Heart right ventricle (tissue), 16 donors: ENCODE measurements at regions of chr17 and their contacts with region 1.

Region 1: DNA sequence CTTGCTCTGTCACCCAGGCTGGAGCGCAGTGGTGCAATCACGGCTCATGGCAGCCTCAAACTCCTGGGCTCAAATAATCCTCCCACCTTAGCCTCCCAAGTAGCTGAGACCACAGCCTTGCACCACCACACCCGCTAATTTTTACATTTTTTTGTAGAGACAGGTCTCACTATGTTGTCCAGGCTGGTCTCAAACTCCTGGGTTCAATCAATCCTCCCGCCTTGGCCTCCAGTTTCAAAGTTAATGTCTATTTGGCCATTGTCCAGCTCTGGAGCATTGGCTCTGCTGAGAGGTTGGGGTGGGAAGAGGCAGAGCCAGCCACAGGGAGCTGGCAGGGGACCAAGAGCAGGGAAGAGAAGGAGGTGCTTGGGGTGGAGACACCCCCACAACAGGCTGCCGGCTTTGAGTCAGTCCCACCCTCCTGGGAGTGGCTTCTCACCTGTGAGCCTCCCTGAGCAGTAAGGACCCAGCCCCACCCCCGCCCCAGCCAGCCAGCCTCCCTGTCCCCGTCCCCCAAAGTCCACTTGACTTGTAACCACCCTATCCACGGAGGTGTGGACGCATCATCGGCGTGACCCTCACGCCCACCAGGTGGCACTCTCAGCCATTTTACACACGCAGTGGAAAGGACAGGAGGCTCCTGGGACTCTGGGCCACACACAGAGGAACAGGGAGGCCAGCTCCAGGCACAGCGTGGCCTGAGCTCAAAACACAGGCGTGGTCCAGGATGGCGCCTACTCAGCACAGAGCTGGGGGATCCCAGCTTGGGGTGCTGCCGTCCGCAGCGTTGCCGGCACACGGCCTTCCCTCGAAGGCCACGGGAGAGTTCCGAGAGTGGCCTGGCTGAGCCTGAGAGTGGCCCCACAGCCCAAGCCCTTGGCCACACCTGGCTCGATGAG is 22.8 kb upstream of the PVALEF start:
- DNase-seq: peak; percentile 81 to 82
- ATAC-seq: peak; percentile 89 to 98 (median 92)
- H3K4me3 ChIP-seq: no peak overlapping the region
- H3K27ac ChIP-seq: no peak overlapping the region
- H3K4me1 ChIP-seq: peaks cover 0 to 9% (median 9%) of the 10 kb centered on the region in 9 donors
- H3K27me3 ChIP-seq: no peaks in the 10 kb centered on the region
- CTCF ChIP-seq: peak; percentile 47 to 77 (median 75)

Region 2: DNA sequence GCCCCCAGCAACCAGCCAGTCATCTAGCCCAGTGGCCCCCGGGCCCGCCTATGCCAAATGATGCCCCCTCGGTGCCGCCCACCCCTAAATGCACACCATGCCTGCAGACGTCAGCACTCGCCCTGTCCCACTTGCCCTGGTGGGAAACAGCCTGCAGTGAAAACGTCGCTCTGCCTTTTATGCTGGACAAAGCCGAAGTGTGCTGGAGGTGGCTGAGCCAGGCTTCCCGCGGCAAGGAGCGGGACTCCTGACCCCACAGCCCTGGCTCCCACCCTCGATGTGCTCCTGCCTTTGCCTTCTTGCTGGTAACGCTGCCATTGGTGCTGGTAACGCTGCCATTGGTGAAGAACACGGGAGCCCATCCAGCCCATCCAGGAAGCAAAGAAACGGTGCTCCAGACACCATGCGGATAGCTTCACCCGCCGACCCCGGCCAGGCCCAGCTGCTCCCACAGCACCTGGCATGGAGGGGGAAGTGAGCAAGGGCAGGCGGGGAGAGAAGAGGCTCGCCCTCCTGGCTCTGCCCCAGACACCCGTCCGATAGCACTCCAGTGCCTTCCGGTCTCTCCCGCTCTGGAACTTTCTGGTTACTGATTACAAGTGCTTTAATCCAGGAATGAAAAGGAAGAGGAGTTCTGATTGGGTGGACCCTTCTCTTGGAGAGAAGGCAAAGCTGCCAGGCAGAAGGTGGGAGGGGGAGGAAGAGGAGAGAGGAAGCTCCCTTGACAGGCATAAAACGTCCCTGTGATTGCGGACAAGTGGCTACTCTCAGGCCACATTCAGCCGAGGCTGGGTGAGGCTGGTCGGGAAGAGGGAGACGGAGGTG is 111.6 kb before region 1 on chr17:
- intact Hi-C with region 1: no loop called
- DNase-seq: peak in 1 of 2 donors; percentile 60
- ATAC-seq: peak; percentile 12 to 72 (median 54)
- H3K4me3 ChIP-seq: peak overlapping the region in 4 of 10 donors; percentile 1 to 17 (median 3)
- H3K27ac ChIP-seq: peak overlapping the region in 8 of 10 donors; percentile 15 to 75 (median 62)
- H3K4me1 ChIP-seq: peaks cover 8 to 47% (median 39%) of the 10 kb centered on the region in 9 donors
- H3K27me3 ChIP-seq: peaks cover 0 to 35% (median 27%) of the 10 kb centered on the region in 7 donors
- CTCF ChIP-seq: no peak

Region 3: GRCh38 chr17:81083125-81083765 is 59.3 kb before region 1 on chr17:
- intact Hi-C with region 1: no loop called
- DNase-seq: peak in 1 of 2 donors; percentile 54
- ATAC-seq: peak; percentile 10 to 72 (median 53)
- H3K4me3 ChIP-seq: peak overlapping the region in 1 of 10 donors; percentile 0
- H3K27ac ChIP-seq: peak overlapping the region in 9 of 10 donors; percentile 57 to 87 (median 73)
- H3K4me1 ChIP-seq: peaks cover 10 to 43% (median 33%) of the 10 kb centered on the region in 9 donors
- H3K27me3 ChIP-seq: no peaks in the 10 kb centered on the region
- CTCF ChIP-seq: no peak

Region 4: DNA sequence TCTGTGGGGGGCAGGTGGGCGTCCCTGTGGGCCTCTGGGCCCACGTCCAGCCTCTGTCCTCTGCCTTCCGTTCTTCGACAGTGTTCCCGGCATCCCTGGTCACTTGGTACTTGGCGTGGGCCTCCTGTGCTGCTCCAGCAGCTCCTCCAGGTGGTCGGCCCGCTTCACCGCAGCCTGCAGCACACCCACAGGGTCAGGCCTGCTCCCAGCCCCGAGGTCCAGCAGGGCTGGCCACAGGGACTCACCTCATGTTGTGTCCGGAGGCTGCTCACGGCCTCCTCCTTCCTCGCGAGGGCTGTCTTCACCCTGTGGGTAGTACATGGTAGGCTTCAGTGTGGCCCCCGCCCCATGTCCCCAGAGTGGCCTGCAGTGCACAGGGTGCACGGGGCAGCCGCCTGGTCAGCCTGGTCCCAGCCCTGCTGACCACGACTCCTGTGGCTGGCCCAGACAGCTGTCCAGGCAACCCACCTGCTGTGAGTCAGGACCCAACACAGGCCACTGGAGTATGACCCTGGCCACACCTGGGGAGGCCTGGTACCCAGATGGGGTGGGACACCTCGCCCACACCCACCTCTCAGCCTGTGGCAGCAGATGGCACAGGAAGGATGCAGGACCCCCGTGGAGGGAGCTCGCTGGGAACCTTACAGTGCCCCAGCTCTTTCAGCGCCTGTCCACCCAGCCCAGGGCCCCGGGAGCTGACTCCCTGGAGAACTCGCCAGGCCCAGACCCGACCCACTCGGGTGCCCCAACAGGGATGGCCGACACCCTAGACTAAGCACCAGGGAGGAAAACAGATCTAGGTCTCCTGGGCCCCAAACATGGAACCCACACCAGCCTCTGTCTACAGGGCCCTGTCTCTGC is 47.4 kb after region 1 on chr17:
- intact Hi-C with region 1: loop called in 4 of 10 experiments (anchors 5 to 10 kb)
- DNase-seq: no peak
- ATAC-seq: peak in 3 of 8 donors; percentile 15 to 28 (median 18)
- H3K4me3 ChIP-seq: no peak overlapping the region
- H3K27ac ChIP-seq: no peak overlapping the region
- H3K4me1 ChIP-seq: peaks cover 0 to 8% (median under 1%) of the 10 kb centered on the region in 9 donors
- H3K27me3 ChIP-seq: no peaks in the 10 kb centered on the region
- CTCF ChIP-seq: peak in 2 of 9 donors; percentile 23 to 26

Region 5: DNA sequence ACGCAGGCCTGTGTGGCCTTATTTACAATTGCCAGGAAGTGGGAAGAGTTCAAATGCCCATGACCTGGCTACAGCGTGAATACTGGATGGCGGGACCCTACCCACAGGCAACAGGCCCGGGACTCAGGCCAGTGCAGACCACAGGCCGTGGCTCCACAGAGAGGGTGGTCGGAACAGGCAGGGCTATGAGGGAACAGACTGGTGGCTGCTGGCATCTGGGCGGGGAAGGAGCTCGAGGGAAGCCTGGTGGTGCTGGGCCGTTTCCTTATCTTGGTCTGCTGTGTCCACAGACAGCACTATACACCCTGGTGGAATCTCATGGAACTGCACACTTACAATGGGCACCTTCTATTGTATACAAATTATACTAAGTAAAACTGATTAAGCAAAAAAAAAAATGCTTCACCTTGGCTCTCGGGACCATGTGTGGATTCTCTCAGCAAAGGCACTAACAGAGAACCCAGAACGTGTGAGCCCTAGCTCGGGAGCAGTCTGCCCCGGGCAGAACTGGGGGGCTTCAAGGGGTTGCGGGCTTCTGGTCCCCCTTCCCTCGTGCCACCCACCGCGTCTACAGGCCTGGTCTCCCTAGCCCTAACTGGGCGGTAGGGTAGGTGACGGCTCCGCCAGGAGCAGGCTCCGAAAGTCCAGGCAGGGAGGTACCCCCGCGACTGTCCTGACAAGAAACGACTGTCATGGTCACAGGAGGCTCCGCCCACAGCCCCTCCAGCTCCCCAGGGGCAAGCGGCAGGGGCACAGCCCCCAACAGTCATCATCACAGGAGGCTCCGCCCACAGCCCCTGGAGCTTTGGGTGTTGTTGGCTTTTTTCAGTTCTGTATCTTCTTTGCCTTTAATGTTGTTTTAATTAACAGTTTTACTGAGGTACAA is 58.4 kb after region 1 on chr17:
- intact Hi-C with region 1: loop called in 8 of 10 experiments (anchors 1 to 10 kb)
- DNase-seq: peak in 1 of 2 donors; percentile 66
- ATAC-seq: peak in 7 of 8 donors; percentile 15 to 70 (median 63)
- H3K4me3 ChIP-seq: no peak overlapping the region
- H3K27ac ChIP-seq: no peak overlapping the region
- H3K4me1 ChIP-seq: peaks cover 0 to 33% (median 9%) of the 10 kb centered on the region in 9 donors
- H3K27me3 ChIP-seq: no peaks in the 10 kb centered on the region
- CTCF ChIP-seq: peak; percentile 36 to 71 (median 66)

Region 6: GRCh38 chr17:81228420-81228819 is 85.9 kb after region 1 on chr17:
- intact Hi-C with region 1: loop called in 2 of 10 experiments (anchors 5 to 10 kb)
- DNase-seq: no peak
- ATAC-seq: peak in 3 of 8 donors; percentile 13 to 24 (median 20)
- H3K4me3 ChIP-seq: no peak overlapping the region
- H3K27ac ChIP-seq: no peak overlapping the region
- H3K4me1 ChIP-seq: peaks cover 0 to 19% (median 4%) of the 10 kb centered on the region in 9 donors
- H3K27me3 ChIP-seq: no peaks in the 10 kb centered on the region
- CTCF ChIP-seq: no peak

Region 7: DNA sequence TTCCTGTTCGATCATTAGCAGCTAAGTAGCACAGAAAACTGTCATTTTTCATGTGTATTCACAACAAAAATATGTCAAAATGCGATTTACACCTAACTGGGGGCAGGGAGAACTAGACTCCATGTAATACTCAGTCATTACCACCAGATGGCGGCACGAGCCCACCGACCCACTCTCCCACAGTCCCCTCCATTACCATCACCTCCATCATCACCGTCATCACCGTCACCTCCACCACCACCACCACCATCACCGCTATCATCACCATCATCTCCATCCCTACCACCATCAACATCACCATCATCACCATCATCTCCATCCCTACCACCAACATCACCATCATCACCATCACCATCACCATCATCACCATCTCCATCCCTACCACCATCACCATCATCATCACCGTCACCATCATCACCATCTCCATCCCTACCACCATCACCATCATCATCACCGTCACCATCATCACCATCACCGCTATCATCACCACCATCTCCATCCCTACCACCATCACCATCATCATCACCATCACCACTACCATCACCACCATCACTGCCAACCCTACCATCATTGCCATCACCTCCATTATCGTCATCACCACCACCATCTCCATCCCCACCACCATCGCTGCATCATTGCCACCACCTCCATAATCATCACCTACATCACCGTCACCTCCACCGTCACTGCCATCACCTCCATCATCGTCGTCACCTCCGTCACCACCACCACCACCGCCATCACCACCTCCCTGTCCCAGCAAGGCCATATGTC is 111.0 kb after region 1 on chr17:
- intact Hi-C with region 1: loop called in 1 of 10 experiments (anchors 2 kb)
- DNase-seq: peak in 1 of 2 donors; percentile 54
- ATAC-seq: peak in 5 of 8 donors; percentile 35 to 55 (median 46)
- H3K4me3 ChIP-seq: no peak overlapping the region
- H3K27ac ChIP-seq: no peak overlapping the region
- H3K4me1 ChIP-seq: peaks cover 4 to 24% (median 13%) of the 10 kb centered on the region in 9 donors
- H3K27me3 ChIP-seq: no peaks in the 10 kb centered on the region
- CTCF ChIP-seq: peak; percentile 67 to 86 (median 79)

Region 8: GRCh38 chr17:81537343-81537855 is 394.8 kb after region 1 on chr17:
- intact Hi-C with region 1: loop called in 1 of 10 experiments (anchors 10 kb)
- DNase-seq: no peak
- ATAC-seq: peak; percentile 51 to 69 (median 60)
- H3K4me3 ChIP-seq: no peak overlapping the region
- H3K27ac ChIP-seq: no peak overlapping the region
- H3K4me1 ChIP-seq: peaks cover 3 to 18% (median 16%) of the 10 kb centered on the region in 9 donors
- H3K27me3 ChIP-seq: peaks cover 16 to 44% (median 40%) of the 10 kb centered on the region in 7 donors
- CTCF ChIP-seq: peak; percentile 54 to 73 (median 66)